Activated CD8-positive, alpha-beta T cell treated with anti-CD3 and anti-CD28 coated beads for 36 hours (primary cell): ENCODE measurements at regions of chr10 and their contacts with region 1.

Region 1: GRCh38 chr10:123380497-123381085 is 226.4 kb downstream of the BUB3 start:
- DNase-seq: no peak
- ATAC-seq: no peak
- H3K4me3 Mint-ChIP-seq: no peak overlapping the region
- H3K27ac Mint-ChIP-seq: no peak overlapping the region
- H3K4me1 Mint-ChIP-seq: no peaks in the 10 kb centered on the region
- H3K27me3 Mint-ChIP-seq: peaks cover 11% of the 10 kb centered on the region
- CTCF ChIP-seq: peak; percentile 27

Region 2: DNA sequence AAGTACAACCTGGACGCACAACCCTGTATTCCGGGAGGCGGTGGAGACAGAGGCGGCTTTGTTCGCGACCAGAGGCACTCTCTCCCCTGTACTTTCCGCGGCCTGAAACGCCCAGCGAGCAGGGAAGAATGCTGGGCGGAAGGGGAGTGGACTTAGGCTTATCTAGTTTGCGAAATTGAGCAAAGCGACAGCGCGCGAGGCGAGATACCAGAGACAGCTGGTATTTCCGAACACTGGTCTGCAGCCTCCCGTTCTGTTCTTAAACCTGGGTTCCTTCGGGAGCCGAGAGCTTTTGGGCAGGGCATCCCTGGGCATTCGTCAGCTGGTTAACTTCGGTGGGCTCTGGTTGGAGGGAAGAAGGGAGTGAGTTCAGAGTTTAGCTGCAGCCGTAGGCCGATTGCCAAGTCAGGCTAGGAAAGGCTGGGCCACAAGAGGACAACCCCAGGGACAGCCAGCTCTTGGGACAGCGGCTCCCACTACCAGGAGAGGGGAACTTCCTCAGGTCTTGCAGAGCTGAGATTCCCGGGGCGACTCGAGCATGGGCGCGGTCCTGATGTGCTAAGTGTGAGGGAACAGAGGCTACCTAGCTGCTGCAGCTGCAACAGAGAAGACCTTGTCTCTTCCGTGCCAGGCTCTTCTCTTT is 240.9 kb before region 1 on chr10:
- CTCF ChIA-PET with region 1: interaction called, 12 read pairs
- POLR2A ChIA-PET with region 1: no interaction called
- intact Hi-C with region 1: loop called (anchors 5 kb)
- DNase-seq: peak; percentile 15
- ATAC-seq: no peak
- H3K4me3 Mint-ChIP-seq: no peak overlapping the region
- H3K27ac Mint-ChIP-seq: no peak overlapping the region
- H3K4me1 Mint-ChIP-seq: peaks cover 44% of the 10 kb centered on the region
- H3K27me3 Mint-ChIP-seq: peaks cover 79% of the 10 kb centered on the region
- CTCF ChIP-seq: no peak

Region 3: DNA sequence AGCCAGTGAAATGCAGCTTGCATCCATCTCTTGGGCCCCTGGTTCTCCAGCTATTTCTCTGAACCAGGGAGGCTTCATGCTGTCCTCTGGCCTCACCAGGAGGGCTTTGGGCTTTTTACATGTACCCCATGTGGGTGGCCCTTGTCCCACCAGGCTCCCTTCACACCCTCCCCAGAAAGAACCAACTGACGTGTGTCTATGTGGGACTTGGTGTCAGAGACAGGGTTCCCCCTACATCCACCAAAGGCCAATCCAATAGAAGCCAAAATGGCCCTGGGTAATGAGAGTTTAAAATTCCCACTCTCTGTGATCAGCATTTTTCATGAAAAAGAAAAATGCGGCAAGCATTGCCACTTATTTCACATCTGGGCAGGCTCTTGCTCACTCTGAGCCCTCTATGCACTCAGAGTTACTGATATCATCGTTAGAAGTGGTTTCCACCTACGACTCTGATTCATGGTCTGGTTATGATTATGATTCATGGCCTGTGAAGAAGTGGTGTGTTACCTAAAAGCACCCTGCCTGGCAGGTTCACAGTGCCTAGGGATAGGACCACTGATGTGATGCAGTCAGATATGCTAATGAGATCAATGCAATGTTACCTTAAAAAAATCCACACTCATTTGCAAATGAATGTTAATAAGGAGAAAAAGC is 92.9 kb before region 1 on chr10:
- CTCF ChIA-PET with region 1: no interaction called
- POLR2A ChIA-PET with region 1: no interaction called
- intact Hi-C with region 1: no loop called
- DNase-seq: peak; percentile 73
- ATAC-seq: peak; percentile 99
- H3K4me3 Mint-ChIP-seq: no peak overlapping the region
- H3K27ac Mint-ChIP-seq: peak overlapping the region; percentile 83
- H3K4me1 Mint-ChIP-seq: peaks cover 18% of the 10 kb centered on the region
- H3K27me3 Mint-ChIP-seq: no peaks in the 10 kb centered on the region
- CTCF ChIP-seq: no peak